Naive thymus-derived CD4-positive, alpha-beta T cell (primary cell): ENCODE measurements at regions of chr18 and their contacts with region 1.

Region 1: DNA sequence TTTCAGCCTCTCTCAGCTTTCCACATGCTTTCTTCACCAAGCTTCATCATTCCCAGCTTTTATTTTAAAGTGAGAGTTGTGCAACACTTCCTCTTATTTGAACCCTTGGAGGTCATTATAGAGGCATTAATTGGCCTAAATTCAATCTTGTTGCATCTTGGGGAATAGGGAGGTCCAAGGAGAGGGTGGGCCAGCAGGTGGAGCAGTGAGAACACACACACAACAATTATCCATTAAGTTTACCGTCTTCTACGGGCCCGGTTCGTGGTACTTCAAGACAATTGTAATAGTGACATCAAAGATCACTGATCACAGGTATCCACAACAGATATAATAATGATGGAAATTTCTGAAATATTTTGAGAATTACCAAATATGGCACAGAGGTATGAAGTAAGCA is 457.2 kb upstream of the SMIM21 start:
- DNase-seq: no peak
- ATAC-seq: no peak
- H3K4me3 ChIP-seq: no peak overlapping the region
- H3K4me3 Mint-ChIP-seq: peak overlapping the region in 1 of 10 donors; percentile 22
- H3K27ac ChIP-seq: no peak overlapping the region
- H3K27ac Mint-ChIP-seq: no peak overlapping the region
- H3K4me1 ChIP-seq: no peaks in the 10 kb centered on the region
- H3K4me1 Mint-ChIP-seq: no peaks in the 10 kb centered on the region
- H3K27me3 ChIP-seq: no peaks in the 10 kb centered on the region
- H3K27me3 Mint-ChIP-seq: peaks cover 0 to 23% (median 4%) of the 10 kb centered on the region in 5 donors

Region 2: GRCh38 chr18:76349067-76349715 is 464.5 kb after region 1 on chr18:
- CTCF ChIA-PET with region 1: no interaction called
- POLR2A ChIA-PET with region 1: no interaction called
- intact Hi-C with region 1: loop called in 1 of 2 experiments (anchors 2 kb)
- DNase-seq: peak in 8 of 9 donors; percentile 42 to 70 (median 60)
- ATAC-seq: peak; percentile 68
- H3K4me3 ChIP-seq: no peak overlapping the region
- H3K4me3 Mint-ChIP-seq: peak overlapping the region in 5 of 10 donors; percentile 4 to 49 (median 12)
- H3K27ac ChIP-seq: no peak overlapping the region
- H3K27ac Mint-ChIP-seq: peak overlapping the region in 2 of 9 donors; percentile 5 to 39
- H3K4me1 ChIP-seq: peaks cover 0 to 3% of the 10 kb centered on the region in 2 donors
- H3K4me1 Mint-ChIP-seq: peaks cover 4 to 9% (median 7%) of the 10 kb centered on the region in 7 donors
- H3K27me3 ChIP-seq: no peaks in the 10 kb centered on the region
- H3K27me3 Mint-ChIP-seq: peaks cover 0 to 9% (median 0%) of the 10 kb centered on the region in 5 donors